Activated T-helper 1 cell treated with anti-CD3 and anti-CD28 coated beads, Interleukin-12 subunit alpha, Interleukin-12 subunit beta, Interleukin-2, Interleukin-4 antibody, amounts not matched to agents 30 ng/mL and 10 ng/mL and 1 ng/mL, durations not matched to agents 14 hours and 24 hours and 36 hours (primary cell): ENCODE measurements at regions of chr15 and their contacts with region 1.

Region 1: DNA sequence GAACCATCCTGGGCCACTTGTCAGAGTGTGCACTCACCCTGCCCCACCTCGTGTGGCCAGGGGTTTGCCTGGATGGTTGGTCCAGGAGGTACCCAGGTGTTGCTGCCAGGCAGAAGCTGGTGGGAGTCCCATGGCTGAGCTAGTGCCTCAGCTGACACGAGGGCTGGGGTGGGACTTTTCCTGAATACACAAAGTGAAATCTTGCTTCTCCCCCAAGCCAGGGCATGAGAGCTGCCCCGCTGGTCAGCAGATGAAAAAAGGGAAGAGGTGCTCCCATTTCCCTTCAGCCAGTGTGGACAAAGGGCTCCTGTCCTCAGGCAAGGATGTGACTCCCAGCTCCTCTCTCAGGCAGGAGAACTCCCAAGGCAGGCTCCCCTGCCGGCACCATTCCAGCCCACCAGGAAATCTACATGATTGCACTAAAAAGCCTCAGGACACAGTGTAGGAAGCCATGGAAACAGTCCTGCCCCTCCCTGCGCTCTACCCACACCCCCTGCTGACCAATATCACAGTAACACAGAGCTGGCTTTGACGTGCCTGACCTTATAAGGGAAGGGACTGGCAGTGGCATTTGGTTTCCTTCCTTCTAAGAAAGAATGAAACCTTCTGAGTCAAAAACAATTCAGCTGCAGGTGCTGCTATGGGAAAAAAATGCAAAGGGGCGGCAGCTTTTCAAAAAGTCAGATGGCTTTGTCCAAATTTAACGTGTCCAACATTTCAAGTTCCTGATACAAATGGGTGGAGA is 33.9 kb downstream of the MYO5C start:
- DNase-seq: peak; percentile 63
- H3K4me3 Mint-ChIP-seq: peak overlapping the region; percentile 68
- H3K27ac Mint-ChIP-seq: peak overlapping the region; percentile 90
- H3K4me1 Mint-ChIP-seq: peaks cover 44% of the 10 kb centered on the region
- H3K27me3 Mint-ChIP-seq: no peaks in the 10 kb centered on the region

Region 2: DNA sequence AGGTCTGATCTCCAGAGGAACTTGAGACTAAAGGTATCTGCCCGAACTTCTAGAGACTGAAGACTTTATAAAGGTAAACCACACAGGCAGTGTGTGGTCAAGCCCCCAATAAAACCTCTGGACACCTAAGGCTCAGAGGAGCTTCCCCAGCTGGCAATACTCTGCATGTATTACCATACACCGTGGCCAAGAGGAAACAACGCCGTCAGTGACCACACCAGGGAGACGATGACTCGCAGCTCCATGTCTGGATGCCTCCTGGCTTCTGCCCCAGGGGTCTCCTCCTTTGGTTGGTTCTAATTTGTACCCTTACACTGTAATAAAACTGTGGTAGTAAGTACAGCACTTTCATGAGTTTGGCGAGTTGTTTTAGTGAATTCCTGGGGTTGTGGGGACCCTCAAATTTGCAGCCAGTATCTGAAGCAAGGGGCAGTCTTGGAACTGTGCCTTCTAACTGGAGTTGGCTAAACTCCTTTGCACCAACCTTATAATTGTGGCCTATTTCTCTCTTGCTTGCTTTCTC is 117.0 kb before region 1 on chr15:
- intact Hi-C with region 1: no loop called
- DNase-seq: no peak
- H3K4me3 Mint-ChIP-seq: no peak overlapping the region
- H3K27ac Mint-ChIP-seq: no peak overlapping the region
- H3K4me1 Mint-ChIP-seq: peaks cover 5% of the 10 kb centered on the region
- H3K27me3 Mint-ChIP-seq: no peaks in the 10 kb centered on the region

Region 3: GRCh38 chr15:52227456-52227855 is 34.2 kb before region 1 on chr15:
- intact Hi-C with region 1: no loop called
- DNase-seq: peak; percentile 58
- H3K4me3 Mint-ChIP-seq: no peak overlapping the region
- H3K27ac Mint-ChIP-seq: no peak overlapping the region
- H3K4me1 Mint-ChIP-seq: peaks cover 36% of the 10 kb centered on the region
- H3K27me3 Mint-ChIP-seq: no peaks in the 10 kb centered on the region

Region 4: DNA sequence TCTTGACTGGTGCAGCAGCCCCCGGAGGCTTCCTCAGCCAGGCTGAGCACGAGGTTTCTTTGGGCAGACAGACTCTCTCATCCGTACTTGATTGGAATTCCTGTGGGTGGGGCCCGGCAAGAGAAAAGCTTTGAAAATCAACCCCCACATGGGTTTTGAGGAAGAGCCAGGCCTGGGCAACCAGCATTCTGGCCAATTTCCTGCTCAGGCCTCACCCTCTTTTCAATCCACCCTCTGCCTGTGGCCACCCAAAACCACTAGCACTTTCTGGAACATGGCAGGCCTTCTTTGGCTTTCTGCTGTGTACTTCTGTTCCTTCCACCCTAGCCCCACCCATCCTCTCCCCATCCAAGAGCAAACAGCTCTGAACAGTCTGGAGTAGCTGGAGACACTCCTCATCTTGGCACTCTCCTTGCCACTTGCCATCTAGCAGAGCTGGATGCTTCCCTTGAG is 28.0 kb after region 1 on chr15:
- intact Hi-C with region 1: loop called (anchors 2 kb)
- DNase-seq: no peak
- H3K4me3 Mint-ChIP-seq: no peak overlapping the region
- H3K27ac Mint-ChIP-seq: no peak overlapping the region
- H3K4me1 Mint-ChIP-seq: peaks cover 39% of the 10 kb centered on the region
- H3K27me3 Mint-ChIP-seq: peaks cover 29% of the 10 kb centered on the region

Region 5: GRCh38 chr15:52445553-52445952 is 183.9 kb after region 1 on chr15:
- intact Hi-C with region 1: no loop called
- DNase-seq: no peak
- H3K4me3 Mint-ChIP-seq: no peak overlapping the region
- H3K27ac Mint-ChIP-seq: no peak overlapping the region
- H3K4me1 Mint-ChIP-seq: peaks cover 15% of the 10 kb centered on the region
- H3K27me3 Mint-ChIP-seq: no peaks in the 10 kb centered on the region